CD4-positive, alpha-beta memory T cell (primary cell): ENCODE measurements at regions of chr20 and their contacts with region 1.

Region 1: DNA sequence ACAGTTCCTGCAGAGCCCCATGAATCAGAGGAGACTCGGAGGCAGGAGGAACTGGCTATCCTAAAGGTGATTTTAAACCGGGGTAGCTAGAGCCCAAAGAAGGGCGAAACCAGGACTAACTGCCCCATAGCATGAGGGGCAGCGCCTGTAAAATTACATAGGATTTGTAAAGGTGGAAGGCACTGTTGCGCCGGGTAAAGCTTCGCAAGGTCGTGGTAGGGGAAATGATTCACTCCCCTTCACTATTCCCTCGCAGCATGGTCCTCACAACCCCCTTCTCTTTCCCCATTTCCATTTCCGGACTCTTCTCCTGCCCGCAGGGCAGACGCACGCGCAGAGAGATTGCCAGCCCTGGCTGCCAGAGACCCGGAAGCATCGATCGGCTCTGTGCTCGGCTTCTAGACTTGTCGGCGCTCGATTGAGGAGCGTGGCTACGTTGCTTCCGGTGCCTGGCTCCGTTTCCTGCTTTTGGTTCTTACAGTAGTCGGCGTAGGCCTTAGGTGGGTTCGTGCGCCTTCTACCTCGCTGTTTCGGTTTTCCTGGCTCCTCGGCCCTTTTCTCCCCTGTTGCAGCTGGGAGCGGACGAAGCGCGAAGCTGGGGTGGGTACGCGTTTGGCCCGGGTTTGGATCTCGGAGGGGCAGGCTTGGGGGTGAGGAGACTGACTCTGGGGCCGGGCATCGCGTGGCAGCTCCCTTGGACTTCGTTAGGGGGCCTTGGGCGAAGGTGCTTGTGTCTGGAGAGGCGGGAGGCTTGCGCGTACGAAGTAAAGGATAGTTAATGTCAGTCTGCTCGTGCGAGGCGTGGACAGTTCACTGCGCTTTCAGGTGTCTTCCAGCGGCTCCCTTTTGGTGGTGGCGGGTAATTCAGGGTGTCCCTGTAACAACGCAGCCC is at the start of gene SNRPB2:
- DNase-seq: peak; percentile 88 to 95 (median 90)
- H3K4me3 ChIP-seq: peak within 1 kb of the TSS; percentile 89 to 98
- H3K4me3 Mint-ChIP-seq: peak within 1 kb of the TSS; percentile 99 to 100 (median 100)
- H3K27ac ChIP-seq: peak within 1 kb of the TSS; percentile 96
- H3K27ac Mint-ChIP-seq: peak within 1 kb of the TSS; percentile 96 to 100 (median 100)
- H3K4me1 ChIP-seq: peaks cover 52% of the 10 kb centered on the region
- H3K4me1 Mint-ChIP-seq: peaks cover 41 to 59% (median 51%) of the 10 kb centered on the region in 4 donors
- H3K27me3 ChIP-seq: peaks cover 4% of the 10 kb centered on the region
- H3K27me3 Mint-ChIP-seq: peaks cover 7% of the 10 kb centered on the region in 2 donors
- total RNA-seq, gene SNRPB2: 45.6 to 49.0 TPM

Region 2: GRCh38 chr20:16573001-16573965 is 156.5 kb before region 1 on chr20 and contains the start of gene KIF16B:
- CTCF ChIA-PET with region 1: interaction called, 3 read pairs
- POLR2A ChIA-PET with region 1: interaction called, 8 read pairs
- intact Hi-C with region 1: loop called (anchors 1 kb)
- DNase-seq: peak; percentile 71 to 80 (median 79)
- H3K4me3 ChIP-seq: peak within 1 kb of the TSS; percentile 57 to 93
- H3K4me3 Mint-ChIP-seq: peak within 1 kb of the TSS; percentile 89 to 95 (median 93)
- H3K27ac ChIP-seq: peak within 1 kb of the TSS; percentile 61
- H3K27ac Mint-ChIP-seq: peak within 1 kb of the TSS; percentile 71 to 89 (median 84)
- H3K4me1 ChIP-seq: peaks cover 35% of the 10 kb centered on the region
- H3K4me1 Mint-ChIP-seq: peaks cover 21 to 60% (median 42%) of the 10 kb centered on the region in 4 donors
- H3K27me3 ChIP-seq: no peaks in the 10 kb centered on the region
- H3K27me3 Mint-ChIP-seq: no peaks in the 10 kb centered on the region
- total RNA-seq, gene KIF16B: 12.0 TPM

Region 3: DNA sequence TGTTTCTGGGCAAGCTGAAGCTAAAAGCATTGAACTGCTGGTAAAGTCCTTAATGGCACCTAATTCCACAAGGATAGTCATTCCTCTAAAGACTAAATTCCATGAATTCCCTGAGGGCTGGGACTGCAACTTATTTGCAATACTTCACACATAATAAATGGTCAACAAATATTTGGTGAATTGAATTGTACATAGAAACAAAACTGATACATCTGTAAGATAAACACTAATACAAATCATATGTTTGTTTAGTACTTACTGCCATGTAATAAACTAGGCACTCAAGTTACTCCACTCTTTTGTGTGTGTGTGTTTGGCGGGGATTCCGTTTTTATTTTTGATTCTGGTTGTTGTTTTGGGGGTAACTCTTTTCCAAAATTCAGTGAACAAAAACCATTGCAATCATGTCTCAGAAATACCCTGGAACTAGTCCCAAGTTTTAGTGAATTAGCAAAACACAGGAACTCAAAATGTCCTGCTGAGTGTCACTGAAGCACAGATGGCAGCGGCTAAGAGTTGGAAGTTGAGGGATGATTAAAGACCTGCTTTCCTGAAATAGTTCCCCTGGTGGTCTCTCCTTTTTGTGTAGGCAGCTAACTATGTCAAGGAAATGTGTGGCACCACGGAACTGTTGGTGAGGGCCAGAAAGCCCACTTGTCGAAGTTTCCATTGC is 74.8 kb before region 1 on chr20:
- CTCF ChIA-PET with region 1: no interaction called
- POLR2A ChIA-PET with region 1: no interaction called
- intact Hi-C with region 1: no loop called
- DNase-seq: no peak
- H3K4me3 ChIP-seq: no peak overlapping the region
- H3K4me3 Mint-ChIP-seq: no peak overlapping the region
- H3K27ac ChIP-seq: no peak overlapping the region
- H3K27ac Mint-ChIP-seq: no peak overlapping the region
- H3K4me1 ChIP-seq: no peaks in the 10 kb centered on the region
- H3K4me1 Mint-ChIP-seq: no peaks in the 10 kb centered on the region
- H3K27me3 ChIP-seq: no peaks in the 10 kb centered on the region
- H3K27me3 Mint-ChIP-seq: peaks cover 13% of the 10 kb centered on the region in 2 donors

Region 4: GRCh38 chr20:16709017-16709416 is 20.8 kb before region 1 on chr20:
- CTCF ChIA-PET with region 1: interaction called, 3 read pairs
- POLR2A ChIA-PET with region 1: interaction called, 11 read pairs
- intact Hi-C with region 1: loop called (anchors 1 kb)
- DNase-seq: peak; percentile 42 to 64 (median 52)
- H3K4me3 ChIP-seq: peak overlapping the region; percentile 13 to 27
- H3K4me3 Mint-ChIP-seq: peak overlapping the region; percentile 26 to 78 (median 52)
- H3K27ac ChIP-seq: no peak overlapping the region
- H3K27ac Mint-ChIP-seq: peak overlapping the region in 5 of 7 donors; percentile 8 to 71 (median 21)
- H3K4me1 ChIP-seq: peaks cover 30% of the 10 kb centered on the region
- H3K4me1 Mint-ChIP-seq: peaks cover 23 to 37% (median 32%) of the 10 kb centered on the region in 4 donors
- H3K27me3 ChIP-seq: no peaks in the 10 kb centered on the region
- H3K27me3 Mint-ChIP-seq: no peaks in the 10 kb centered on the region